CD8-positive, alpha-beta memory T cell (primary cell): ENCODE measurements at regions of chr12 and their contacts with region 1.

Region 1: DNA sequence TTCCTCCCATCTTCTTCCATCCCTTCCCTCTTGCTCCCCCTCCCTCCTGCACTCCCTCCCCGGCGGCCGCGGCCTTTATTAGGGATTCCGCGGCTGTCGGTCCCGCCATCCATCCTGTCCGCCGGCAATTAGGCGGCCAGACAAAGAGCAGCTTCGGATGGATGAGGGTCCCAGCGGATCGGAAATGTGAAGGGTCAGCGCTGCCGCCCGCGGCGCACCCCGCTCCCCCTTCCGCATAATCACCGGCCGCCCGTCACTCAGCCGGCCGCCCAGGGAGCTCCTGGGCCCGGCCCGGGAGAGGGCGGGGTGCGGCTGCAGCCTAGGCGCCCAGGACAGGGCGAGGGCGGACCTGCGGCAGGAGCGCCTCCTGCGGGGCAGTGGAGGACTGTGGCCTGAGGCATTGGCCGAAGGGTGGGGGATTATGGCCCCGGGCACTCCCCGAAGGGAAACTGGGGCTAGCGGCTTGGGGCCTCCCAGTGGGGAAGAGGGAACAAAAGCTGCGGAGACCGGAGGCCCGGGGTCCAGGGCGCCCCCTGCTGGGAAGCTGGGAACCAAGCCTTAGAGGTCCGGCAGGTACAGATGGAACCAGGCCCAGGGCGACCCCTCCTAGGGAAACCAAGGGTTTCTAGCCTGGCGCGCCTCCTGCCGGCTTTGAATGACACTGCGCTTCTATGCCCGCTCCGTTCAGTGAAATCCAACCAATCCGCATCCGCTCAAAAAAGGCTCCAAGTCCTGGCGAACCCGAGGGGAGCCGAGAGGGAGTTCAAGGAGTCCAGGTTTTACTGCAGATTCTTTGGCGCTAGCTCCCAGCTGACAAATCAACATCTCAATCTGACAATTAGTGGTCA is 4.4 kb upstream of the DNAJC22 start:
- DNase-seq: peak; percentile 57 to 81 (median 63)
- H3K4me3 ChIP-seq: peak overlapping the region; percentile 63
- H3K4me3 Mint-ChIP-seq: peak overlapping the region; percentile 62 to 91 (median 75)
- H3K27ac ChIP-seq: no peak overlapping the region
- H3K27ac Mint-ChIP-seq: peak overlapping the region in 4 of 8 donors; percentile 12 to 36 (median 32)
- H3K4me1 ChIP-seq: peaks cover 47% of the 10 kb centered on the region
- H3K4me1 Mint-ChIP-seq: peaks cover 40 to 64% (median 48%) of the 10 kb centered on the region in 3 donors
- H3K27me3 ChIP-seq: peaks cover 43% of the 10 kb centered on the region
- H3K27me3 Mint-ChIP-seq: peaks cover 35 to 44% of the 10 kb centered on the region in 2 donors

Region 2: DNA sequence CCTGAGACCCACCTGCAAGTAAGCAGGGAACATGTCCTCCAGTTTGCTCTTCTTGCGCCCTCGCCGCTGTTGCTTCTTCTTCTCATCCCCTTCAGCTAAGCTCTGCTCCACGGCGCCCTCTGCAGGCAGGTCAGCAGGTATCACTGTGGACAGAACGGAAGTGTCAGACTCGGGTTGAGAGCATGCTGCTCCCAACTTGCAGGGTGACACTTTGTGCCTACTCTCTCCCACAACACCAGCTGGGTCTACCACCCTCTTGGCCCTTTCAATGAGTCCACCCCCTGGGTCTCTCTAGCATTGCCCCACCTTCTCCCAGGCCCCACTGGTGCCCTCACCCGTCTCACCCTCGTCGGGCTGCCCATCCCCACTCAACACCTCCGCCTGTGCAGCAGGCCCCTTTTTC is 298.4 kb before region 1 on chr12:
- CTCF ChIA-PET with region 1: no interaction called
- POLR2A ChIA-PET with region 1: no interaction called
- DNase-seq: peak; percentile 73 to 91 (median 78)
- H3K4me3 ChIP-seq: no peak overlapping the region
- H3K4me3 Mint-ChIP-seq: peak overlapping the region in 2 of 7 donors; percentile 18 to 57
- H3K27ac ChIP-seq: peak overlapping the region; percentile 18
- H3K27ac Mint-ChIP-seq: peak overlapping the region; percentile 62 to 97 (median 94)
- H3K4me1 ChIP-seq: no peaks in the 10 kb centered on the region
- H3K4me1 Mint-ChIP-seq: peaks cover 8 to 16% (median 12%) of the 10 kb centered on the region in 3 donors
- H3K27me3 ChIP-seq: no peaks in the 10 kb centered on the region
- H3K27me3 Mint-ChIP-seq: no peaks in the 10 kb centered on the region

Region 3: GRCh38 chr12:49288412-49288853 is 53.9 kb before region 1 on chr12:
- CTCF ChIA-PET with region 1: interaction called, 109 read pairs
- POLR2A ChIA-PET with region 1: interaction called, 3 read pairs
- DNase-seq: peak; percentile 51 to 75 (median 67)
- H3K4me3 ChIP-seq: no peak overlapping the region
- H3K4me3 Mint-ChIP-seq: no peak overlapping the region
- H3K27ac ChIP-seq: no peak overlapping the region
- H3K27ac Mint-ChIP-seq: no peak overlapping the region
- H3K4me1 ChIP-seq: no peaks in the 10 kb centered on the region
- H3K4me1 Mint-ChIP-seq: no peaks in the 10 kb centered on the region
- H3K27me3 ChIP-seq: peaks cover 7% of the 10 kb centered on the region
- H3K27me3 Mint-ChIP-seq: peaks cover 16 to 48% of the 10 kb centered on the region in 2 donors

Region 4: DNA sequence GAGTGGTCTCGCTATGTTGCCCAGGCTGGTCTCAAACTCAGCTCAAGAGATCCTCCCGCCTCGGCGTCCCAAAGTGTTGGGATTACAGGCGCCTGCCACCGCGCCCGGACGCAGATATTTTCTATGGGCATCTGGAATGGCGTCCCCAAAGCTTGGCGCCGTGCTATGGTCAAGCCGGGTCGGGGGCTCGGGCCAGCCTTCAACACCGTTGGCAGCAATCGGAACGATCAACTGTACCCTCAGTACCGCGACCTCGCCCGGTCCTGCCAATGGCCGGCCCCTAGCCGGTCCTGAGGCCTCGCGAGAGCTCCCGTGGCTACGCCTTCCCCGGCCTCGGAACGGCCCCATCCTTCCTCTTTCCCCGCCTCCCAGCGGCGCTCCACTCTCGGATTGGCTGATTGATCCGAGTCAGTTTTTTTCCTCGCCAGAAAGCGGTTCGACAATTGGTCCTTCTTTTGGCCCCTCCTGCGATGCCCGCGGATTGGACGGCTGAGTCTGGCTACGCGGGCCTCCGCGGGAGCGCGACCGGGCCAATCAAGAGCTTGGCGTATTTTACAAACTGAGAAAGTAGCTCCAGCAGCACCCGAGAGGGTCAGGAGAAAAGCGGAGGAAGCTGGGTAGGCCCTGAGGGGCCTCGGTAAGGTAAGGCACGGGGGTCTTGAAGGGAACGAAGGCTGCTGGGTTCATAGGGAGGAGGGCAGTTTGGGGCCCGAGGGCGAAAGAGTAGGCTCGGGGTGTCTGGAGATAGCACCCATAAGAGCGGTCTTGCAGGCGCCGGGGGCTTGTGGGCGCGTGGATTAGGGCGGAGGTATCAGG is 19.4 kb before region 1 on chr12 and contains the start of gene TROAP:
- CTCF ChIA-PET with region 1: interaction called, 36 read pairs
- POLR2A ChIA-PET with region 1: interaction called, 7 read pairs
- DNase-seq: peak; percentile 95 to 98 (median 97)
- H3K4me3 ChIP-seq: peak within 1 kb of the TSS; percentile 79
- H3K4me3 Mint-ChIP-seq: peak within 1 kb of the TSS; percentile 86 to 95 (median 90)
- H3K27ac ChIP-seq: peak within 1 kb of the TSS; percentile 77
- H3K27ac Mint-ChIP-seq: peak within 1 kb of the TSS; percentile 18 to 97 (median 85)
- H3K4me1 ChIP-seq: peaks cover 14% of the 10 kb centered on the region
- H3K4me1 Mint-ChIP-seq: peaks cover 18 to 23% (median 22%) of the 10 kb centered on the region in 3 donors
- H3K27me3 ChIP-seq: no peaks in the 10 kb centered on the region
- H3K27me3 Mint-ChIP-seq: no peaks in the 10 kb centered on the region
- total RNA-seq, gene TROAP: 33.6 to 35.0 TPM

Region 5: DNA sequence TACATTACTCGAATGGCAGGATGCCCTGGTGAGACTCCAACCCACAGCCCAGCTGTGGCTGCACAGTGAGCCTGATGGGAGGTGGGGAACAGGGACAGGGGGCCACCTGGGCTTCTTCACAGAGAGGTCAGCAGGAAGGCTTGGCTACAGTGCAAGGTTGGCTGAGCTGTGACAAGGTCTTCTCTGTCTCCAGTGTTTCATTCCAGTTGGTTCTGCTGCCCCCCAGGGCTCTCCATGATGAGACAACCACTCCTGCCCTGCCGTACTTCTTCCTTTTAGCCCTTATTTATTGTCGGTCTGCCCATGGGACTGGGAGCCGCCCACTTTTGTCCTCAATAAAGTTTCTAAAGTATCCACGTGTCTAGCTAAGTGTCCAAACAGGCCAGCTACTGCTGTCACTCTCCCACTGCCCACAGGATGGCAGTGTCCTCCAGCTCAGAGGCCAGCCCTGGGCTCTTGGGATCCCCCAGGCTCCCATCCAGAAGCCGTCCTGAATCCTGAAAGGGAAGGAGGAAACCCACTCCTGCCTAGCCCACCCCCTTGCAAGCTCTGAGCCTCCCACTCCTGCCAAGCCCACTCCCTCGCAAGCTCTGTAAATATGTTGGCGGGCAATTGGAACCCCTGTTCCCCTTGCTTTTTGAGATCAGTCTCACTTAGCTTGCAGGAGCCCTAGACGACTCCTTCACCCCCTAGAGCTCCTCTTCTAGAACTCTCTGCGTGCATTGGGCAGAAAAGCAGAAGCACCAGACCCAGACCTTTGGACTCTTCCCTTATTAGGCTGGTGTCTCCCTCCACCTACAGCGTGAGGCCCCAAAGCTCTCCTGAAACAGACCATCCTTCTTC is 10.7 kb before region 1 on chr12:
- CTCF ChIA-PET with region 1: interaction called, 36 read pairs
- POLR2A ChIA-PET with region 1: no interaction called
- DNase-seq: no peak
- H3K4me3 ChIP-seq: no peak overlapping the region
- H3K4me3 Mint-ChIP-seq: peak overlapping the region in 1 of 7 donors; percentile 32
- H3K27ac ChIP-seq: no peak overlapping the region
- H3K27ac Mint-ChIP-seq: peak overlapping the region in 2 of 8 donors; percentile 25 to 54
- H3K4me1 ChIP-seq: peaks cover 1% of the 10 kb centered on the region
- H3K4me1 Mint-ChIP-seq: peaks cover 5 to 15% (median 6%) of the 10 kb centered on the region in 3 donors
- H3K27me3 ChIP-seq: peaks cover 22% of the 10 kb centered on the region
- H3K27me3 Mint-ChIP-seq: peaks cover 29 to 41% of the 10 kb centered on the region in 2 donors

Region 6: DNA sequence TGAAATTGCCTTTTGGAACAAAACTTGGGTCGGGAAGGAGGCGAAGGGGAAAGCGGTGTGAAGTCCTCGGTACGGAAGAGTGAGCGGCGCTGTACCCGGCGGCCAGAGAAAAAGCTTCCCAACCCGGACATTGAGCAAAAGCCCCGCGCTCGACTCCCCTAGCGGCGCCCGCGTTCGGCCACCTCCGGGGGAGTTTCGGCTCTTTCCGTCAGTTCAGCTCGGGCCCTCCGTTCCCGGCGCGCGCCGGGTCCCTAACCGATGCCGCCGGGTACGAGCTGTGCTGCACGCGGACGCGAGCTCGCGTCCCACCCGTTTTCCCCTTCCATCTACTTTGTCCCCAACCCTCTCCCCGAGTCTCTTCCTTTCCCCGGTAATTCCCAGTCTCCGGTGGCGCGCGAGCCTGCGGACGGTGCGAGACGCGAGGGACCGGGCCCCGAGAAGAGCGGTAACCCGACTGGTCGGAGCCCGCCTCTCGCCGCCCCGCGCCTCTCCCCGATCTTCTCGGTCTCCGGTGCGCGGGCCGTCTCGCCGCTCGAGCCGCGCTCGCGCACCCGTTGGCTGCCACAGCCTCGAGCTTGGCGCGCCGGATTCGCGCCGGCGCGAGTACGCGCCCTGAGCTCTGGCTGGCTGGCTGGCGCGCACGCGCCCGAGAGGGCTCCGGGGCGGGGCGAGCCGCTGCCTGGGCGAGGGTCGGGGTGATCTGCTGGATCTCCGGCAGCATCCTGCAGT is 24.5 kb after region 1 on chr12:
- CTCF ChIA-PET with region 1: interaction called, 18 read pairs
- POLR2A ChIA-PET with region 1: interaction called, 12 read pairs
- DNase-seq: peak; percentile 76 to 89 (median 79)
- H3K4me3 ChIP-seq: peak overlapping the region; percentile 82
- H3K4me3 Mint-ChIP-seq: peak overlapping the region; percentile 89 to 98 (median 96)
- H3K27ac ChIP-seq: peak overlapping the region; percentile 91
- H3K27ac Mint-ChIP-seq: peak overlapping the region; percentile 60 to 98 (median 94)
- H3K4me1 ChIP-seq: peaks cover 20% of the 10 kb centered on the region
- H3K4me1 Mint-ChIP-seq: peaks cover 19 to 43% (median 37%) of the 10 kb centered on the region in 3 donors
- H3K27me3 ChIP-seq: no peaks in the 10 kb centered on the region
- H3K27me3 Mint-ChIP-seq: peaks cover 0 to 4% of the 10 kb centered on the region in 2 donors

Region 7: DNA sequence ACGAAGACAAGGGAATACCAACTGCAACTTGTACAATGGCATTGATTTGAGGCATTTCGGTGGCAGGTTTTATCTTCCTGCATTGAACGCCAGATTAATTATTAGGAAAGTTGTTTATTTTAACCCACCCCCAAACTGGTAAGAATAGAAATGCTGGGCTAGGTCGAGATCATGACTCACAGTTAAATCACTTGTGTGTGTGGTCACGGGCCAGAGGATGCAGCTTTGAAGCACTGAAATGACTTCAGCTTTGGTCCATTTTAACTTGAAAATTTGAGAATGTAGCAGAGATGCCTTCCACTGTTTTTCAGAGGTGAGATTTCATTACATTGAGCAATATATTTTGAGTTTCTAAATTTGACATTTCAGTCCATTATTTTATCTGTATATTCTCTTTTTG is 173.0 kb after region 1 on chr12:
- CTCF ChIA-PET with region 1: interaction called, 16 read pairs
- POLR2A ChIA-PET with region 1: no interaction called
- DNase-seq: no peak
- H3K4me3 ChIP-seq: no peak overlapping the region
- H3K4me3 Mint-ChIP-seq: no peak overlapping the region
- H3K27ac ChIP-seq: no peak overlapping the region
- H3K27ac Mint-ChIP-seq: no peak overlapping the region
- H3K4me1 ChIP-seq: no peaks in the 10 kb centered on the region
- H3K4me1 Mint-ChIP-seq: no peaks in the 10 kb centered on the region
- H3K27me3 ChIP-seq: no peaks in the 10 kb centered on the region
- H3K27me3 Mint-ChIP-seq: no peaks in the 10 kb centered on the region